Ascending aorta (tissue), 2 donors: ENCODE measurements at regions of chrX and their contacts with region 1.

Region 1: DNA sequence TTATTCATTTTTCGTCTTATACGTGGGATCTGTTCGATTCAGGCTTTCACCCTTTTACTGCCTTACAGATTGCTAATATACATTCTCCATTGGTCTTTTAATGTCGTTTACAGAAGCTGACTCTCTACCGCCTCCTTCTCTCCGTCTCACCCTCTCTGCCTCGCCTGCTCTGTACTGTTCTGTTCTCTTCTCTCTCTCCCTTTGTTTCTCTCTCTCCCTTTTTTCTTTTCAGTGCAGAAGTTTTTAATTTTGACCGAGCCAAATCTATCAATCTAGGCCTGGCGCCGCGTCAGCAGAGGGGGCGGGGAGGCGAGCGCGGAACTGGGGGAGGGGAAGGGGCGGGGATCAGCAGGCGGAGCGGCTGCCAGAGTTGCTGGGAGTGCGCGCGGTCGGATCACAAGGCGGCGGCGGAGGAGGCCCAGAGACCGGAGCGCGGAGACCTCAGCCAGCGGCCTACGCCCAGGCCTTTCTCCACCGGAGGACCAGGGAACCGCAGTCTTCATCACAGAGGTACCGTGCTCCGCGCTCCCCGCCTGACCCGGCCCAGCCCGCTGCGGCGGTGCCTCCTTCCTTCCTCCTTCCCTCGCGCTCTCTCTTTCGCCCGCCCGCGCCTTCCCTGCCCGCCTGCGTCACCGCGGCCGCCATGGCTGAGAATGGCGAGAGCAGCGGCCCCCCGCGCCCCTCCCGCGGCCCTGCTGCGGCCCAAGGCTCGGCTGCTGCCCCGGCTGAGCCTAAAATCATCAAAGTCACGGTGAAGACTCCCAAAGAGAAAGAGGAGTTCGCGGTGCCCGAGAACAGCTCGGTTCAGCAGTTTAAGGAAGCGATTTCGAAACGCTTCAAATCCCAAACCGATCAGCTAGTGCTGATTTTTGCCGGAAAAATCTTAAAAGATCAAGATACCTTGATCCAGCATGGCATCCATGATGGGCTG is at the start of gene UBQLN2:
- DNase-seq: peak in 1 of 2 donors; percentile 85
- H3K4me3 ChIP-seq: peak within 1 kb of the TSS; percentile 66 to 68
- H3K27ac ChIP-seq: peak within 1 kb of the TSS; percentile 95 to 96
- H3K4me1 ChIP-seq: peaks cover 0 to under 1% of the 10 kb centered on the region in 2 donors
- H3K27me3 ChIP-seq: no peaks in the 10 kb centered on the region
- CTCF ChIP-seq: peak in 1 of 3 experiments; percentile 15
- total RNA-seq, gene UBQLN2: 23.9 TPM

Region 2: GRCh38 chrX:55710701-55711100 is 852.8 kb before region 1 on chrX:
- intact Hi-C with region 1: loop called (anchors 5 kb)
- DNase-seq: peak in 1 of 2 donors; percentile 80
- H3K4me3 ChIP-seq: no peak overlapping the region
- H3K27ac ChIP-seq: peak overlapping the region; percentile 44 to 57
- H3K4me1 ChIP-seq: peaks cover 0 to 8% of the 10 kb centered on the region in 2 donors
- H3K27me3 ChIP-seq: no peaks in the 10 kb centered on the region
- CTCF ChIP-seq: no peak

Region 3: DNA sequence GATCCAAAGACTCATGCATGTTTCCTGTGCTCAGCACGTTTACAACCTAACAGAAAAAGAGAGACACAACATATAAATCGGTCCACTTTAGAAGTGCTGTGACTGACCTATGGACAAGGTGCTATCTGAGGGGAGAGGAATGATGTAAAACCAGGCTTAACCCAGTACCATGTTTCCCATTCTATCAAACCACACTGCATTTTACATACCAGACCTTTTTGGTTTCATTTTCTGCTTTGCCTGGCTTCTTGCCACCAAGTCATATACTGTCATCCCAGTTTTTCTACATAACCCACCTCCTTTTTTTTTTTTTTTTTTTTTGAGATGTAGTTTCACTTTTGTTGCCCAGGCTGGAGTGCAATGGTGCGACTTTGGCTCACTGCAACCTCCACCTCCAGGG is 249.2 kb before region 1 on chrX:
- intact Hi-C with region 1: no loop called
- DNase-seq: no peak
- H3K4me3 ChIP-seq: no peak overlapping the region
- H3K27ac ChIP-seq: no peak overlapping the region
- H3K4me1 ChIP-seq: no peaks in the 10 kb centered on the region
- H3K27me3 ChIP-seq: no peaks in the 10 kb centered on the region
- CTCF ChIP-seq: no peak

Region 4: DNA sequence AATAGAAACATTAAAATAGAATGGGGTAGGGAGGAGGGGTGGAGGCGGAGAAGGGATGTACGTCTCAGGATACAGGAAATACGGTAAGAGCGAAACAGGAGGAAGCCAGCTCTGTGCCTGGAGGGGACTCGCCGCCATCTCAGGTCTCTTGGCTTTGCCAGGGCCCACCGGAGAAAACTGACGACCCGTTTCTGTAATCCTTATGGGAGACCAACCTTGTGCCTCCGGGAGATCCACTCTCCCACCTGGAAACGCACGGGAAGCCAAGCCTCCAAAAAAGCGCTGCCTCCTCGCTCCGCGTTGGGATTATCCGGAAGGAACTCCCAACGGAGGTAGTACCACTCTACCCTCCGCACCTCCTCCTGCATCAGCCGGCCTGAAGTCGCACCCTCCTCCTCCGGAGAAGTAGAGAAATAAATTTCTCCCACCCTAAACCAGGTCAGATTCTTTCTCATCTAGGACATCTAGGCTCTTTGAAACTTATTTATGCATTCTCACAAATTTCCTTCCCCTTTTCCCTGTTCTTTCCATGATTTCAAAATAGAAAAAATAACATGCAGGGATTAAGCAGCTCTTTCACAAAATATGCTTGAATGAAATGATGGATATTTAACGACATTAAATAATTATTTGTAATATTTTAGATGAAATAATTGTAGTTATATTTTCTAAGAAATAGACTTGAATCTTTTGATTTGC is 165.8 kb after region 1 on chrX and contains the start of gene NBDY:
- intact Hi-C with region 1: loop called (anchors 5 kb)
- DNase-seq: peak in 1 of 2 donors; percentile 64
- H3K4me3 ChIP-seq: peak within 1 kb of the TSS; percentile 58 to 66
- H3K27ac ChIP-seq: peak within 1 kb of the TSS; percentile 75 to 76
- H3K4me1 ChIP-seq: no peaks in the 10 kb centered on the region
- H3K27me3 ChIP-seq: no peaks in the 10 kb centered on the region
- CTCF ChIP-seq: no peak
- total RNA-seq, gene NBDY: 15.4 TPM